ENCODE measurements at regions of chr1 and their contacts with region 1.

Region 1: DNA sequence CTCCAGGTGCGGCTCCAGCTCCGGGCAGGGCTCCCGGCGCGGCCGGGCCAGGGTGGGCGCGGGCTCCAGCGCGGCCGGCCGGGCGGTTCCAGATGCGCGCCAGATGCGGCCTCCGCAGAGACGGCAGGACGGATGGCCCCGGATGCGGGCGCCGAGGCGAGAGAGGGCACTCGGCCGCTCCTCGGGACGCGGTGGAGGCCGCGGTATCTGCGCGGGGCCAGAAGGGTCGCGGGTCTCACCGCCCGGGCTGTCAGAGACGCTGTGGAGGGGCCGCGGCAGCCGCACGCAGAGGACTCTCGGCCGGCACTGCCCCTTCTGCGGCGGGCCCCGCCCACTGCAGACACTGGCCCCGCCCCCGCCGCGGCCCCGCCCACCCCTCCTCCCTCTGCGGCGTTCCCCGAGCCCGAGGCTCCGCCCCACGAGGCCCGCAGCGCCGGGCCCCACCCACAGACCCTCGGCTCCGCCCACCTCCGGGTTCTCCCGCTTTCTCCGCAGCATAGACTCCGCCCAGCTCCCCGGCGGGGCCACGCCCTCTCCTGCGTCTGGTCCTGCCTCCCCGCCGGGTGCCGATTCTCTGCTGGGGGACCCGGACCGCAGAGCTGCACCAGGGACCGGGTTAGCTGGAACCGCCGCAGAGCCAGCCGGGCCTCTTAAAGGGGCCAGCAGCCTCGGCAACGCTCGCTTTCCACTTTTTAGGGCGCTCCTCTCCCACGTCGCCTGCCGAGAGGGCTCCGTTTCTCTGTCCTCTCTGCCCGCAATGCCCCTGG is at the start of gene IFFO2:
- DNase-seq: peak; percentile 95 to 100 (median 98)
- H3K4me3 ChIP-seq: peak within 1 kb of the TSS; percentile 62 to 97 (median 79)
- H3K27ac ChIP-seq: peak within 1 kb of the TSS in 58 of 59 donors; percentile 4 to 93 (median 81)
- H3K27me3 ChIP-seq: no peaks in the 10 kb centered on the region
- CTCF ChIP-seq: peak in 14 of 56 donors; percentile 4 to 51 (median 19)
- total RNA-seq, gene IFFO2: 15.3 to 36.0 (median 21.7) TPM

Region 2: GRCh38 chr1:18703041-18703641 is 253.4 kb before region 1 on chr1:
- intact Hi-C with region 1: no loop called
- DNase-seq: peak in 2 of 10 donors; percentile 32 to 42
- H3K4me3 ChIP-seq: peak overlapping the region in 50 of 59 donors; percentile 14 to 61 (median 42)
- H3K27ac ChIP-seq: peak overlapping the region in 3 of 59 donors; percentile 21 to 33 (median 30)
- H3K27me3 ChIP-seq: peaks cover 0 to 40% (median 3%) of the 10 kb centered on the region in 45 donors
- CTCF ChIP-seq: peak in 1 of 56 donors; percentile 13

Region 3: DNA sequence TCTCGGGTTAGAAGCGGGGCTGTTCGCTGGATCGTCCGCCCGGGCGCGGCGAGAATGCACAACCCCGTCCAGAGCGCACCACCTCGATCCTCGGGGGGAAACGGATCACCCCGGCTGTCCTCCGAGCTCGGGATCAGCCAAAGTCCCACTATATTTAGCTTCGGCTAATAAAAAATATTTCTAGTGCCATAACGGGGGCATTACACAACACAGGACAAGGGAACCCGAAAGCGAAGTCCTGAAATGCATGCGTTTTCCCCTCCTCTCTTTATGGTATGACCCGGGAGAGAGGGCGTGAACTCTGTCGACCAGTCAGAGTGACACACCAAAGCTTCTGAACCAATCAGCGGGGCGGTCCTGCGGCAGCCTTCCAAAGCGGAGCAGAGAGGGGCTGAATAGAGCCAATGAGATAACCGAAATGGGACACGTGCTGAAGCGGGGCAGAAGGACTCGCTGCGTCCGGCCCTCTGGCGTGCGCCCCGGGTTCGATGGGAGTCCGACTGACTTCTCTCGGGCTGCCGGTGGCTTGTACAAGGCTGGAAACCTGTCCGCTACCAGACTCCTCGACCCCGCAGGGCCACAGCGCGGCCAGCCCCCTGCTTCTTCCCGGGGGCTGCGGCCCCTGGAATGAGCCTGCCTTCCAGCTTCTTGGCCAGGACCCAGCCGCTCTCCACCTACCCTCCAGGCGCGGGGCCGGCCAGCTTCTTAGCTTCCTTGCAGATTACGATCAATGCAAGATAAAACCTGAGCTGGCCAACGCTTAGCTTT is 53.8 kb before region 1 on chr1 and contains the start of gene ALDH4A1:
- intact Hi-C with region 1: loop called (anchors 2 to 10 kb)
- DNase-seq: peak; percentile 94 to 100 (median 98)
- H3K4me3 ChIP-seq: peak within 1 kb of the TSS; percentile 64 to 99 (median 88)
- H3K27ac ChIP-seq: peak within 1 kb of the TSS; percentile 46 to 98 (median 91)
- H3K27me3 ChIP-seq: no peaks in the 10 kb centered on the region
- CTCF ChIP-seq: peak in 37 of 56 donors; percentile 7 to 61 (median 32)
- total RNA-seq, gene ALDH4A1: 16.8 to 112 (median 40.4) TPM

Region 4: DNA sequence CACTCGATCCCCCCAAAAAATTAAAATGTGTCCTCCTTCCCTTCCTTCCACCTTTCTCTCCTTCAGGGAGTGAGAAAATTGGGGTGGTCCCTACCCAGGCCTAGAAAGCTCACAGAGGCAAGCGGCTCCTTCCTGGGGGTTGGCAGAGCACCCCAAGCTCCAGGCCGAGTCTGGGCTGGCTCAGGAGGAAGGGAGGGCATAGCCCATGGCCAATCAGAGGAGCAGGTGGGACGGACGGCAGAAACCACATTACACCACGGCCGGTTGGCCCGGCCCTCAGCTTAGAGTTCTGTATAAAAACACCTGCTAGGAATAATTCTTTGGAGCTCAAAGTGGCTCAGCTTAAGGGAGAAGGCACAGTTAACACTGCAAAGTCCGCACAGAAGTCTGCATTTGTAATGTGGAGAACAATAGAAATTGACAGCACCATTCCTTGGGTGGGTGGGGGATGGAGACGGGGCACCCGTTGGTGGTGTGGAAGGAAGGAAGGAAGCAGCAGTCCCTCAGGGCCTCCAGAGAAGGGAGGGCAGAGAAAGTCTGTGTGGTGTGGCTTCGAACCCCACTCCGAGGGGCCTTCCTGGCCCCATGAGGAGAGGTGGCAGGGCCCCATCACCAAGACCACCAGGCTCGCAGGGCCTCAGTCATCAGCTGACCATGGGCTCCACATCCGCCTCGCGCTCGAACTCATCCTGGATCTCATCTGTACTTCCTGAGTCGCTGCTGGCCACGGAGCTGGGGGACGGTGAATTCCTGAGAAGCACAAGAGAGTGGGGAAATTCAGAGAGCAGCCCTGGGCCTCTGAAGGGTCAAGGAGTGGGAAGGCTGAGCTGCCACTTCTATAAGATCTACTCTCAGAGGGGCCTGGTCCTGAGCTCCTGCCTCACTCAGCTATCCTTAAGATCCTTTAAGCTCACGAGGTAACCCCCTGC is 48.4 kb before region 1 on chr1:
- intact Hi-C with region 1: loop called (anchors 2 to 10 kb)
- DNase-seq: no peak
- H3K4me3 ChIP-seq: peak overlapping the region in 12 of 59 donors; percentile 1 to 36 (median 13)
- H3K27ac ChIP-seq: peak overlapping the region in 55 of 59 donors; percentile 4 to 92 (median 77)
- H3K27me3 ChIP-seq: no peaks in the 10 kb centered on the region
- CTCF ChIP-seq: no peak

Region 5: DNA sequence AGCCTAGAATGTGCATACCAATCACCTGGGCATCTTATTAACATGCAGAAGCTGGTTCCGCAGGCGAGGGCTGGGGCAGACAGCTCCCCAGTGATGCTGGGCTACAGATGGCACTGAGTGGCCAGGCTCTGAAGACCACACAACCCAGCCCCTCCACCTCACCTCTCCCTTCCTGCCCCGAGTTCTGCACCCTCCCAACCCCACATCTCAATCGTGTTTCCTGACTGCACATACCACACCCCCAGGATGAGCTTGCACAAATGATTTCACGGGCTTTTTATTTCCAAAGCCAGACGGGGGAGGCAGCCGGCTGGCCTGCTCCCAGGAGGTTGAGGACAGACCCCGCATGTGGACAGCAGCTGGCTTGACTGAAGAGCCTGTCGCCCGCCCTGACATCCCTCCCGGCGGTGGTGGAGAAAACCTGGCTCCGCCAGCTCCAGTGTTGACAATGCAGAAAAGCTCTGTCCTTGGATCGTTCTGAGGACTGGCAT is 32.8 kb before region 1 on chr1:
- intact Hi-C with region 1: loop called in 1 of 2 experiments (anchors 2 kb)
- DNase-seq: peak in 5 of 10 donors; percentile 58 to 78 (median 67)
- H3K4me3 ChIP-seq: peak overlapping the region in 17 of 59 donors; percentile 1 to 52 (median 15)
- H3K27ac ChIP-seq: peak overlapping the region in 56 of 59 donors; percentile 29 to 98 (median 93)
- H3K27me3 ChIP-seq: no peaks in the 10 kb centered on the region
- CTCF ChIP-seq: no peak

Region 6: GRCh38 chr1:18999359-18999758 is 42.8 kb after region 1 on chr1:
- intact Hi-C with region 1: loop called in 1 of 2 experiments (anchors 5 kb)
- DNase-seq: no peak
- H3K4me3 ChIP-seq: no peak overlapping the region
- H3K27ac ChIP-seq: no peak overlapping the region
- H3K27me3 ChIP-seq: no peaks in the 10 kb centered on the region
- CTCF ChIP-seq: no peak

Region 7: DNA sequence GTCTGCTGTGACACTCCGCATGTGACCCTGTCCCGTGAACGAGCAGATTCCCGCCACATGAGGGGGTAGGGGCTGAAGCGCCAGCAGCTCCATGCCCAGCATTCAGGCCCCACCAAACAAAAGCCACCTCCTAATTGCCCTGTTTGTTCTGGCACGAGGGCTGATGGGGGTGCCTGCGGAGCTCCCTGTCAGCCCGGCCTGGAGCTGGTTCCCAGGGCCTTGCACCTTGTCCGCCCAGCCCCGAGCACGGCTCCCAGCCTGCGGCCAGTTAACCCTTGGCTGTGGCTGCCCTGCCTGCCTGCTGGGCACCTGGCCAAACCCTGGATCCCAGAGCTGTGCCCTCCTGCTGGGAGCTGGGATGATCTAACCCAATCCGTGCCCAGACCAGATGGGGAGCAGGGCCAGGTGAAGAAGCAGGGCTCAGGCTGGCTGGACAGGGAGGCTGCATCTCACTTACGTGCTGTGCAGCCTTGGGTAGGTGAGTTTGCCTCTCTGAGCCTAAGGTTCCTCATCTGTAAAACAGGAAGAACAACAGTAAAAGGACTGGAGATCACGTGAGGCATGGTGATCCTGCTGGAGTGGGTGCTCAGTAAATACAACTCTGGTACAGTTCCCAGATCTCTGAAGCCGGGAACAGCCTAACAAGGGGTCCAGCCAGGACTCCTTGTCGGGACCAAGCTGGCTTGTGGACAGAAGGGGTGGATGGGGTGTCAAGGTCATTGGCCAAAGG is 110.8 kb after region 1 on chr1:
- intact Hi-C with region 1: loop called in 1 of 2 experiments (anchors 5 kb)
- DNase-seq: peak in 5 of 10 donors; percentile 50 to 83 (median 80)
- H3K4me3 ChIP-seq: peak overlapping the region in 29 of 59 donors; percentile 1 to 54 (median 16)
- H3K27ac ChIP-seq: peak overlapping the region in 23 of 59 donors; percentile 2 to 79 (median 55)
- H3K27me3 ChIP-seq: no peaks in the 10 kb centered on the region
- CTCF ChIP-seq: peak in 18 of 56 donors; percentile 11 to 49 (median 20)